A673 (cell line): ENCODE measurements at regions of chr22 and their contacts with region 1.

Region 1: GRCh38 chr22:39003165-39003638 is 10.9 kb upstream of the APOBEC3C start:
- DNase-seq: peak; percentile 78
- H3K4me3 ChIP-seq: no peak overlapping the region
- H3K27ac ChIP-seq: no peak overlapping the region
- H3K4me1 ChIP-seq: peaks cover 7% of the 10 kb centered on the region
- H3K27me3 ChIP-seq: no peaks in the 10 kb centered on the region
- CTCF ChIP-seq: peak; percentile 74

Region 2: DNA sequence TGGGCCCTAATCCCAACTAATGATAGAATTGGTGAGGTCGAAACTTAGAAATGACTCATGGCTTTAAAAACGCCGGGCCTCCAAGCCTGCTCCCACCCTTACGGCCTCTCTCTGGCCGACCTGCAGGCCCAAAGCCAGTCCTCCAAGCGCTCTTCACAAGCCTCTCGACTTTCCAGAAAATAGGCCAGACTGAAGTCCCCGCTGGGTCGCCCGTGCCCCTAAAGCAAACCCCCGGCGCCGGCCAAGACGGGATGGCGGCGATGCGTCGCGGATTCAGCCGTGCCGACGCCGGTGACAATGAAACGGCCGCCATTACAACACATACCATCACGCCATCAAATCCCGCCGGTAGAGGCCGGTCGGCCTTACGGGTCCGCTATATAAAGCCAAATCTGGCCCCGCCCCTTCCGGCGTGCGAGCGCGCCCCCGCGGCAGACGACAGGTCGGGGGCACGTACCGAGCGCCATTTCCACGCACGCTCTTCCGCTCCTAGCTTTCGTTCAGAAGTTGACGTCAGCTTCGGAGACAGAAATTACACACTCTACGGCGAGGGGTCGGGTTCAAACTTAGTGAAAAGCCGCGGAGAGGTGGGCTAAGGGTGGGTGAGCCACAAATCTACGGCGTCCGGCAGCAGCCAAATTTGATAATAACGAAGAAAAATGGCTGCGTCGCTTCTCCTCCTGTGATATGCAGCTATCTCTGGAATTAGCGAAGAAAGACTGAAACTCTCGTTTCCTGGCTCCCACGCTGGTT is 316.2 kb after region 1 on chr22 and contains the start of gene RPL3:
- CTCF ChIA-PET with region 1: interaction called, 5 read pairs
- POLR2A ChIA-PET with region 1: no interaction called
- intact Hi-C with region 1: loop called (anchors 10 kb)
- DNase-seq: peak; percentile 100
- H3K4me3 ChIP-seq: peak within 1 kb of the TSS; percentile 87
- H3K27ac ChIP-seq: peak within 1 kb of the TSS; percentile 98
- H3K4me1 ChIP-seq: peaks cover 30% of the 10 kb centered on the region
- H3K27me3 ChIP-seq: no peaks in the 10 kb centered on the region
- CTCF ChIP-seq: 0 out of 2 replicates have a peak, but pooled peaks have one; percentile 18
- total RNA-seq, gene RPL3: 1,117 and 1,141 TPM in 2 replicates